CD4-positive, alpha-beta T cell (primary cell): ENCODE measurements at regions of chr1 and their contacts with region 1.

Region 1: GRCh38 chr1:39926343-39926793 is 24.7 kb upstream of the MYCL start:
- DNase-seq: peak in 1 of 14 experiments; percentile 40
- ATAC-seq: no peak
- H3K4me3 ChIP-seq: no peak overlapping the region
- H3K4me3 Mint-ChIP-seq: no peak overlapping the region
- H3K27ac ChIP-seq: no peak overlapping the region
- H3K27ac Mint-ChIP-seq: no peak overlapping the region
- H3K4me1 ChIP-seq: no peaks in the 10 kb centered on the region
- H3K4me1 Mint-ChIP-seq: no peaks in the 10 kb centered on the region
- H3K27me3 ChIP-seq: no peaks in the 10 kb centered on the region
- H3K27me3 Mint-ChIP-seq: no peaks in the 10 kb centered on the region
- CTCF ChIP-seq: no peak

Region 2: GRCh38 chr1:40132383-40133311 is 206.3 kb after region 1 on chr1:
- CTCF ChIA-PET with region 1: no interaction called
- POLR2A ChIA-PET with region 1: no interaction called
- intact Hi-C with region 1: loop called in 1 of 2 experiments (anchors 10 kb)
- DNase-seq: no peak
- ATAC-seq: no peak
- H3K4me3 ChIP-seq: no peak overlapping the region
- H3K4me3 Mint-ChIP-seq: no peak overlapping the region
- H3K27ac ChIP-seq: no peak overlapping the region
- H3K27ac Mint-ChIP-seq: no peak overlapping the region
- H3K4me1 ChIP-seq: no peaks in the 10 kb centered on the region
- H3K4me1 Mint-ChIP-seq: no peaks in the 10 kb centered on the region
- H3K27me3 ChIP-seq: no peaks in the 10 kb centered on the region
- H3K27me3 Mint-ChIP-seq: peaks cover 5% of the 10 kb centered on the region
- CTCF ChIP-seq: no peak